ENCODE measurements at regions of chr13 and their contacts with region 1.

Region 1: DNA sequence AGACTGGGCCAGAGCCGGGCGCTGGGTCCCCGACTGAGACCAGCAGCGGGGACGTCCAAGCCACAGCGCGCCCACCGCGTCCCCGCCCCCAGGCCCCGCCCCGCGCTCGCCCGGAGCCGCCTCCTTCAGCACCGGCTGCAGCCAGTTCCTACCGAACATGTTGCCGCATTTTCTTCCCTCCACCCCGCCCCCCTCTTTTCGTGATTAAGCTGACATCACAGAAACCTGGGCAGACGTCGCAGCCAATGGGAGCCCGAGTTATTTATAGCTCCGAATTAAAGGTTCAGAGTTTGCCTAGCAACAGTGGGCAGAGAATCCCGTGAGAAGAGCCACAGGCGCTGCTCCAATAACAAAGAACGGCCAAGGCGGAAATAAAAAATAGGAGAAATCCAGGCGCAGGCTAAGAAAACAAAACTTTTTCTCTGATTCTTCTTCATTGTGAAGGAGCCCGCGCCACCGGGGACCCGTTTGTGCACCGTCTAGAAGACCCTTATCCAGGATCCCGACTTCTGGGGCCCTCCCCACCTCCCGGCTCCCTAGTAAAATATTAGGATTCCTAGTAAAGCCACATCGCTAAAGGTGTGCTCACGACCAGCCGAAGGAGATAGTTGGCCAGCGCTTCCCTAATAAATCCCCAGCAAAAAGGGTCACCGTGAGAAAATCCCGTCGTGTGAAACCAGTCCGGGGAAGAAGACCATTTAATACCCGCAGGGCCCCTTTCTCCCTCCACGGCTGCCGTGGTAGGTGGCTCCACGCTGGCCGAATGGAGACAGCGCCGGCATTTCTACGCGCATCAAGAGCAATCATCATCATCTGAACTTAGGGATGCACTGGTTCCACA is 61.7 kb downstream of the SERP2 start:
- DNase-seq: peak; percentile 94 to 97 (median 96)
- ATAC-seq: peak; percentile 67 to 85 (median 80)
- H3K4me3 ChIP-seq: peak overlapping the region; percentile 60 to 87 (median 80)
- H3K27ac ChIP-seq: peak overlapping the region; percentile 91 to 99 (median 96)
- H3K4me1 ChIP-seq: peaks cover 0 to 53% (median 29%) of the 10 kb centered on the region in 12 donors
- H3K27me3 ChIP-seq: no peaks in the 10 kb centered on the region
- CTCF ChIP-seq: peak in 1 of 12 donors; percentile 8
- POLR2A ChIP-seq: peak; percentile 90 to 92

Region 2: GRCh38 chr13:42633495-42633894 is 1801.9 kb before region 1 on chr13:
- intact Hi-C with region 1: no loop called
- DNase-seq: no peak
- ATAC-seq: no peak
- H3K4me3 ChIP-seq: no peak overlapping the region
- H3K27ac ChIP-seq: no peak overlapping the region
- H3K4me1 ChIP-seq: no peaks in the 10 kb centered on the region
- H3K27me3 ChIP-seq: no peaks in the 10 kb centered on the region
- CTCF ChIP-seq: no peak
- POLR2A ChIP-seq: no peak

Region 3: DNA sequence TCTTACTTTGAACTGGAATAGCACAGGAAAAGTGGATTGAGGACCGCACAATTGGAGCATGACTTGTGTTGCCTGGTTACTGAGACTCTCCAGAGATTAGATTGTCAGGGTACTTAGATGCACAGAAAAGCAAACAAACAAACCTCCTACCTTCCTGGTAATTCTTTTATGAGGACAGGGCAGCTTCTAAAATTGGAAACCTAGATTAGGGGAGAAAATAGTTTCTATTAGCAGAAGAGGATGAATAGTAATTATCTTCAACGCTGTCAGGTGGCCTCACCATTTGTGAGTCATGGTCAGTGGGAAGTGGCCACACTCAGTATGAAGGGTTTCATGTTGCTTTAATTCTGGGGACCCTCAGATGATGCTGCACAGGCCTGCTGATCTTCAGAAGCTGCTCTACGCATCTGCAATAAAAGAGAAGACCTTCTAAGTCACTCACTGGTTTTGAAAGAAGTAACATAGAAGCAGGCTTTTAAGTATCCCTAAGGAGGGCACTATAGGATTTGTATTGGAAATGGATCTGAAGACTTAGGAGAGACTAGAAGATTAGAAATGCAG is 448.9 kb before region 1 on chr13:
- intact Hi-C with region 1: loop called in 3 of 10 experiments (anchors 2 to 5 kb)
- DNase-seq: peak in 1 of 5 donors; percentile 37
- ATAC-seq: peak; percentile 89 to 95 (median 92)
- H3K4me3 ChIP-seq: no peak overlapping the region
- H3K27ac ChIP-seq: peak overlapping the region; percentile 51 to 86 (median 77)
- H3K4me1 ChIP-seq: peaks cover 0 to 45% (median 15%) of the 10 kb centered on the region in 12 donors
- H3K27me3 ChIP-seq: peaks cover 0 to 2% (median 0%) of the 10 kb centered on the region in 9 donors
- CTCF ChIP-seq: peak in 3 of 12 donors; percentile 5 to 31 (median 19)
- POLR2A ChIP-seq: no peak

Region 4: DNA sequence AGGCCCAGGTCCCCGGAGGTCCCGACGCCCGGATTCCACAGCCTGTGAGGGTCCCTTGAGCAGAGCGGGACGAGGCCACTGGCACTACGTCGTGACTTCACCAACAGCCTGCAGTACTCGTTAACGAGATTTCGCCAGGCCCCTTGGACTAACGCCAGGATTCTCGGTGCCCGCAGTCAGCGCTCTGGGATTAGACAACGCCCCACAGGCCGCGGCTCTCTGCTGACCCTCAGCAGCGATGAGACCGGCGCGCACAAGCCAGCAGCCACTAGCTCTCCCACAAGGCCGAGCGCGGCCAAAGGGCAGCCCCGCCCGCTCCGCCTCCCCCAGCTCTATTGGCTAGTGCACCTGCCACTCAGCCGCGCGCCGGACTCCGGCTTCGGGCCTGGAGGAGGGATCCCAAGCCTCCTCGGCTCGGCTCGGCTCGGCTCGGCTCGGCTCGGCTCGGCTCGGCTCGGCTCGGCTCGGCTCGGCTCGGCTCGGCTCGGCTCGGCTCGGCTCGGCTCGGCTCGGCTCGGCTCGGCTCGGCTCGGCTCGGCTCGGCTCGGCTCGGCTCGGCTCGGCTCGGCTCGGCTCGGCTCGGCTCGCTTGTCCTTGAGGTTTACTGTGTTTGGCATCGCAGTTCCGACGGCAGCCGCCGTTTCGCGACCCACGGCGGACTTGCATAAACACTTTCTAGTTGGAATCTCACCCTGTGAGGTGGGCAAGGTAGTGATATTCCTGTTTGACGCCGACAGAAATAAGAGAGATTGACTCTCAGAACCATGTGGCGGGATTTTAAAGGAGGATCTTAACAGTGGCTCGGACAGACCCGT is 293.4 kb before region 1 on chr13:
- intact Hi-C with region 1: loop called in 6 of 10 experiments (anchors 2 to 10 kb)
- DNase-seq: peak; percentile 98 to 100 (median 98)
- ATAC-seq: peak; percentile 99 to 100 (median 100)
- H3K4me3 ChIP-seq: peak overlapping the region; percentile 28 to 73 (median 58)
- H3K27ac ChIP-seq: peak overlapping the region; percentile 86 to 99 (median 96)
- H3K4me1 ChIP-seq: peaks cover 0 to 21% (median 9%) of the 10 kb centered on the region in 12 donors
- H3K27me3 ChIP-seq: no peaks in the 10 kb centered on the region
- CTCF ChIP-seq: peak in 1 of 12 donors; percentile 16
- POLR2A ChIP-seq: peak; percentile 84 to 94

Region 5: GRCh38 chr13:44243198-44243857 is 192.0 kb before region 1 on chr13:
- intact Hi-C with region 1: loop called in 5 of 10 experiments (anchors 2 to 5 kb)
- DNase-seq: peak in 3 of 5 donors; percentile 46 to 52 (median 47)
- ATAC-seq: peak; percentile 39 to 92 (median 70)
- H3K4me3 ChIP-seq: no peak overlapping the region
- H3K27ac ChIP-seq: peak overlapping the region in 8 of 12 donors; percentile 6 to 65 (median 43)
- H3K4me1 ChIP-seq: peaks cover 0 to 18% (median 5%) of the 10 kb centered on the region in 12 donors
- H3K27me3 ChIP-seq: no peaks in the 10 kb centered on the region
- CTCF ChIP-seq: peak; percentile 25 to 62 (median 46)
- POLR2A ChIP-seq: no peak

Region 6: GRCh38 chr13:44306401-44307192 is 128.8 kb before region 1 on chr13:
- intact Hi-C with region 1: loop called in 9 of 10 experiments (anchors 2 to 10 kb)
- DNase-seq: peak; percentile 62 to 86 (median 77)
- ATAC-seq: peak; percentile 34 to 84 (median 61)
- H3K4me3 ChIP-seq: peak overlapping the region in 3 of 12 donors; percentile 3 to 20 (median 16)
- H3K27ac ChIP-seq: peak overlapping the region; percentile 69 to 96 (median 88)
- H3K4me1 ChIP-seq: peaks cover 18 to 81% (median 57%) of the 10 kb centered on the region in 12 donors
- H3K27me3 ChIP-seq: no peaks in the 10 kb centered on the region
- CTCF ChIP-seq: no peak
- POLR2A ChIP-seq: no peak

Measured in heart left ventricle (tissue), 16 donors.